Left colon (tissue), 2 donors: ENCODE measurements at regions of chr9 and their contacts with region 1.

Region 1: DNA sequence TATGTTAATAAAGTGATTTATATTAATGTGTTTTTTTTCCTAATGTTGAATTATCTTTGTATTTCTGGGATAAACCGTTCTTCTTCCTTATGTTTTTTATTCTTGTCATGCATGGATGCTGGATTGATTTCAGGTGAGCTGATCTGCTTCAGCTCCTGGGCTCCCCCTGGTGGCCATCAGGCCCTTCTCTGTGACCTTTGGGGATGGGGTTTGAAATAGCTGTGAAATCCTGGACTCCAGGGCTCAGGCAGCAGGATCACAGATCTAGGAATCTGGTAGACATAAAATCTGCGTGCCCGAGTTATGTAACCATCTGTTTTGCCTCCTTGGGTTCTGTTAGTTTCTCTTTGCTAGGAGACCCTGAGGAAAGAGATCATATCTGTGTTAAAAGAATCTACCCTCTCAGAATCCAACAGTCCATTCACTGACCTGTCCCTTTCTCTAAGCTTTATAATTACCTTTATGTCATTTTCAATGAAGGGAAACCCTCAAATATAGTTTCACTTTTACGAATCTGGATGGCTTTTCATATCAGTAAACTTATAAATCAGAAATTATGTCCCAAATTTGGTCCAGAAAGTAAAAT is 12.2 kb upstream of the OR13J1 start:
- DNase-seq: peak; percentile 67 to 92
- ATAC-seq: peak; percentile 89

Region 2: GRCh38 chr9:35826071-35826701 is 56.2 kb before region 1 on chr9:
- intact Hi-C with region 1: loop called in 1 of 2 experiments (anchors 2 kb)
- DNase-seq: no peak
- ATAC-seq: peak; percentile 44